ENCODE measurements at regions of chr17 and their contacts with region 1.

Region 1: DNA sequence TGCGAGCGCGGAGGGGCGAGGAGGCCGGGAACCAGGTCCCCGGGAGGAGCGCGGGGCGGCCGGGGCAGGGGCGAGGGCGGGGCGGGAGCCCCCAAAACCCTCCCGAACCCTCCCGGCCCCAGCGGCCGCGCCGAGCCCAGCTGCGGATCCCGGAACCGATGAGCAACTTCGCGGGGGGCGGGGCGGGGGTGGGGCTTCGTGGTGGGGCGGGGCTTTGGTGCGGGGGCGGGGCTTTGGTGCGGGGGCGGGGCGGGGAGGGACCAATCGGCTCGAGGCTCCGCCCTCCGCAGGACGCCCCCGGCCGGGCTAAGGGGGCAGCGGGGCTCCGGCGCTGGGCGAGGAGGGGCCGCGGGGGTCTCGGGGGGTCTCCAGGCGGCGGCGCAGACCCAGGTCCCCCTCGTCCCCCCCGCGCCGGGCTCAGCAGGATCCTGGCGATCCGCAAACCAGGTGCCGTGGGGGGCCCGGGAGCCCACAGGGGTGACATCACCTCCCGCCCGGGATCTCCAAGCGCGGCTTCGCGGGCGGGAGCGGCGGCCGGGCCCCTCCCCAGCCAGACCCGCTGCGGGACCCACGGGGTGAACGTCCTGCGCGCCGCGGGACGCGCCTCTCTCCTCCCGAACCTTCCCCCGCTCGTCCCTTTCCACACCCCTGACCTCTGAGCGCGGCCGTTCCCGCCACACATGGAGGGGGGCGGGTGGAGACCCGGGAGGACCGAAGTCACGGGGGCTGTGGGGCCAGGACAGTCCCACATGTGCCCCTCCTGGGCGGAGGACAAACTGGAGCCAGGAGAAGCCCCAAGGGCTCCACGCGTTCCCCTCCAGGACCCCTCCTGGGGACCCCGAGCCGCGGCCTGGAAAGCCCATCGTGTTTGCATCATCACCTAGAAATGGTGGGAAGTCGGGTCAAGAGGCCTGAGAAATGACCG is at the start of gene ABR:
- DNase-seq: peak in 1 of 2 donors; percentile 91
- H3K4me3 ChIP-seq: peak within 1 kb of the TSS; percentile 53
- CTCF ChIP-seq: no peak
- POLR2A ChIP-seq: no peak
- total RNA-seq, gene ABR: 60.9 to 98.8 (median 88.3) TPM

Region 2: GRCh38 chr17:1122533-1123392 is 57.3 kb before region 1 on chr17:
- intact Hi-C with region 1: loop called (anchors 10 kb)
- DNase-seq: peak; percentile 73 to 97
- H3K4me3 ChIP-seq: no peak overlapping the region
- CTCF ChIP-seq: peak in 1 of 3 donors; percentile 79
- POLR2A ChIP-seq: no peak

Region 3: GRCh38 chr17:2244545-2245525 is 1064.8 kb after region 1 on chr17:
- intact Hi-C with region 1: no loop called
- DNase-seq: peak; percentile 88 to 97
- H3K4me3 ChIP-seq: no peak overlapping the region
- CTCF ChIP-seq: peak in 2 of 3 donors; percentile 66 to 86
- POLR2A ChIP-seq: no peak